BJ (cell line): ENCODE measurements at regions of chr7 and their contacts with region 1.

Region 1: DNA sequence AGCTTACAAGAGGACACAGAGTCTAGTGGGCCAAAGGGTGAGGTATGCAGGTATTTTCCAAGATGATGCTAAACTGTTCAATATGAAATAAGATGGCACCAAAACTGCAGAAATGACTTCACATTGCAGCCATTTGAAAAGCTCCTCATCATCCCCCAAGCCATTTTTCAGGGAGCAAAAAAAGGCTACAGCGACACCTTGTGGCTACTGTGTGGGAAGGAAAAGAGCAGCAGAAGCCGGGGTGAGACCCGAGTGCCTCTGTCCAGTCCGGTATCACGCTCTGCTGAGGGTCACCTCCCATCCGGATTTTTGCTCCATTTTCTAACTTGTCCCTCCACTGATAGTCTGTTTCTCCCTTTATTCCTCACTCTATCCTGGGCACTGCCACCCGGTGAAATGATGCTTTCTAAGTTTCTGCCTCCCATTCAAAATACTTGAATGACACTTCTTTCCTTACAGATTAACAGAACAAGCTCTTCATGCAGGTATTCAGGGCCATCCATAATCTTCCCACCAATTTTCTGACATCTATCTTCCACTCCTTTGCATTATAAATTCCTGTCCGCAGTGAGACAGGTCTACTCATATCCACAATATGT is 220.2 kb downstream of the DGKI start:
- DNase-seq: no peak
- H3K4me3 ChIP-seq: no peak overlapping the region
- H3K27me3 ChIP-seq: no peaks in the 10 kb centered on the region
- CTCF ChIP-seq: peak; percentile 78

Region 2: GRCh38 chr7:137475966-137476365 is 150.6 kb before region 1 on chr7:
- CTCF ChIA-PET with region 1: no interaction called
- POLR2A ChIA-PET with region 1: no interaction called
- DNase-seq: no peak
- H3K4me3 ChIP-seq: no peak overlapping the region
- H3K27me3 ChIP-seq: no peaks in the 10 kb centered on the region
- CTCF ChIP-seq: no peak

Region 3: GRCh38 chr7:137606061-137606674 is 20.4 kb before region 1 on chr7:
- CTCF ChIA-PET with region 1: interaction called, 25 read pairs
- POLR2A ChIA-PET with region 1: no interaction called
- DNase-seq: peak; percentile 31
- H3K4me3 ChIP-seq: no peak overlapping the region
- H3K27me3 ChIP-seq: no peaks in the 10 kb centered on the region
- CTCF ChIP-seq: peak; percentile 22; the same call in 1 of the 2 replicates

Region 4: GRCh38 chr7:137611606-137612005 is 15.0 kb before region 1 on chr7:
- CTCF ChIA-PET with region 1: interaction called, 35 read pairs
- POLR2A ChIA-PET with region 1: no interaction called
- DNase-seq: no peak
- H3K4me3 ChIP-seq: no peak overlapping the region
- H3K27me3 ChIP-seq: no peaks in the 10 kb centered on the region
- CTCF ChIP-seq: no peak

Region 5: DNA sequence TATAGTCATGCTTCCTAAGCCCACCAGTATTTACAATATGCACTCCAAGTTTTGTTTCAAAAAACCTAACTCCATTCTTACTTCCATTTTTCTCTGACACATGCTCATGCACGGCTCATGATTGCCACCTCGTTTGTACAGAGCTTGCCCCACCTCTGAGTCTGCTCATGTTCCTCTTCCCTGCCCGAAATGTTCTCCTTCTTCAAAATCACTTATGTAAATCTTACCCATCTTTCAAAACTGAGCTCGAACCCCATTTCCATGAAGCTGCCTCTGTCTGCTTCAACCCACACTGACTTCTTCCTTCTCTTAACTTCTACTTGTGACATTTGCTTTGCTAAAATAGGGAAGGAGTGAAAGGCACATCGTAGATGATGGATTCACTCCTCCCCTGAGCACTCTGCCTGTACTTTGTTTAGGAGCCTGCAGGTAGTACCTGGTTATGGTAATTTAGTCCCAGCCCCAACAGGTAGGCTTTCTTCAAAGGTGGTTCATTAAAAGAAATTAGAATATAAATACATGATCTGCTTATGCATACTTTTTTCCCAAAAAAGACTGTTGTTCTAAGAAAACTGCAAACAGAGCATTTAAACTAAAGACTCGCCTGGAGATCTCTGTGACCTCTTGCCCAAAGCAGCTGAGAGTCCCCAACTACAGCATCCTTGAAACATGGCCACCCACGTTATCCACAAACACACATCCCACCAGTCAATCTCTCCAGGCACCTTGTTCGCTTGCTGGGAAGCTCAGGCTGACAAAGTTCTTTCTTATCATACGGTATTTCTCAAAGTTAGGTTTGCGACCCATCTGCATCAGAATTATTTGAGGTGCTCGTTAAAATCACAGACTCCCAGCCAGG is 48.2 kb after region 1 on chr7:
- CTCF ChIA-PET with region 1: no interaction called
- POLR2A ChIA-PET with region 1: no interaction called
- DNase-seq: no peak
- H3K4me3 ChIP-seq: no peak overlapping the region
- H3K27me3 ChIP-seq: no peaks in the 10 kb centered on the region
- CTCF ChIP-seq: no peak

Region 6: DNA sequence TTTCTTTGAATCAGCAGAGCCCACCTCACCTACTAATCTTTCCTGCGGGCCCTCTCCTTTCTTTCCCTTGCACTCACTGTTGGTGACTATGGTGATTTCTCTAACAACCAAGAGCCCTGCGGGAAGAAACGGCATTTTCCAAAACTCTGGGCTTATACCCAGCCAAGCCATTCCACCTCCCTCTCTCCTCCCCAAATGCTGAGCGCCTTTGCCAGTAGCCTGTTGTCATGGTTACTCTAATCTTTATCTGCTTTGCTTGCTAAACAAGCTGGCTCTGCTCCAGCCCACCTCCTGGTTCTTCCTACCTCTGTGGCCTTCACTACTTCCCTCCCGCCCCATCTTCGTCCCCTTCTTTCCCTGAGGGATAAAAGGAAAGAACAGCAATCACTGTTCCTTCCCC is 133.5 kb after region 1 on chr7:
- CTCF ChIA-PET with region 1: no interaction called
- POLR2A ChIA-PET with region 1: no interaction called
- DNase-seq: no peak
- H3K4me3 ChIP-seq: no peak overlapping the region
- H3K27me3 ChIP-seq: no peaks in the 10 kb centered on the region
- CTCF ChIP-seq: no peak